A673 (cell line): ENCODE measurements at regions of chr10 and their contacts with region 1.

Region 1: GRCh38 chr10:94362360-94363250 is at the start of gene NOC3L:
- DNase-seq: peak; percentile 97
- H3K4me3 ChIP-seq: peak within 1 kb of the TSS; percentile 74
- H3K27ac ChIP-seq: peak within 1 kb of the TSS; percentile 72
- H3K4me1 ChIP-seq: peaks cover 11% of the 10 kb centered on the region
- H3K27me3 ChIP-seq: no peaks in the 10 kb centered on the region
- CTCF ChIP-seq: peak; percentile 74
- total RNA-seq, gene NOC3L: 36.8 and 48.6 TPM in 2 replicates

Region 2: DNA sequence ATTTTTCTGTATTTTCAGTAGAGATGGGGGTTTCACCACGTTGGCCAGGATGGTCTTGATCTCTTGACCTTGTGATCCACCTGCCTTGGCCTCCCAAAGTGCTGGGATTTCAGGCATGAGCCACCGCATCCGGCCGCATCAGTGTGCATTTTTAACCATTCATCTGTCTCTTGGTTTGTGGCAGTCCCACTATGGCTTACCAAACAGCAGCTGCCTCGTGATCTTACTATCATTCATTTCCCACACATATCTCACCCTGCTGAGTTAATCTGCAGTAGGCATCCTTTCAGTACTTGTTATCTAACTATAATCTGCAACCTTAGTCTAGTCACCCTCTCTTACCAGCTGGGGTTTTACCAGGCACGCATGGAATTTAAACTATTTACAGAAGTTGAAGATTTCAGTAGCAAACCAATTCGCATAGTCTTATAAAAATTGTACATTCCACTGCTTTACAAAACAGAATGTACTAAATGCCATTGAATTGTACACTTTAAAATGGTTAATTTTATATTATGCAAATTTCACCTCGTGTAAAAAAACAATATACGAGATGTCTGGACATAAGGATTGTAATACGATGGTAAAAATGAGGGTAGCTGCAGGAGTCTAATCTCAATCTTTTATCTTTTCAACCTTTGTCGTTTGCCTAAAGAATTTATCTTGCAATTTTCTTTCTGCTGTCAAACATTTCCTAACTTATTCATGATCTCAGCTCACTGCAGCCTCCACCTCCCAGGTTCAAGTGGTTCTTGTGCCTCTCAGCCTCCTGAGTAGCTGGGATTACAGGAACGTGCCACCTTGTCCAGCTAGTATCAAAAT is 35.2 kb after region 1 on chr10:
- CTCF ChIA-PET with region 1: no interaction called
- POLR2A ChIA-PET with region 1: no interaction called
- intact Hi-C with region 1: no loop called
- DNase-seq: peak; percentile 60
- H3K4me3 ChIP-seq: no peak overlapping the region
- H3K27ac ChIP-seq: no peak overlapping the region
- H3K4me1 ChIP-seq: no peaks in the 10 kb centered on the region
- H3K27me3 ChIP-seq: peaks cover 10% of the 10 kb centered on the region
- CTCF ChIP-seq: no peak

Region 3: DNA sequence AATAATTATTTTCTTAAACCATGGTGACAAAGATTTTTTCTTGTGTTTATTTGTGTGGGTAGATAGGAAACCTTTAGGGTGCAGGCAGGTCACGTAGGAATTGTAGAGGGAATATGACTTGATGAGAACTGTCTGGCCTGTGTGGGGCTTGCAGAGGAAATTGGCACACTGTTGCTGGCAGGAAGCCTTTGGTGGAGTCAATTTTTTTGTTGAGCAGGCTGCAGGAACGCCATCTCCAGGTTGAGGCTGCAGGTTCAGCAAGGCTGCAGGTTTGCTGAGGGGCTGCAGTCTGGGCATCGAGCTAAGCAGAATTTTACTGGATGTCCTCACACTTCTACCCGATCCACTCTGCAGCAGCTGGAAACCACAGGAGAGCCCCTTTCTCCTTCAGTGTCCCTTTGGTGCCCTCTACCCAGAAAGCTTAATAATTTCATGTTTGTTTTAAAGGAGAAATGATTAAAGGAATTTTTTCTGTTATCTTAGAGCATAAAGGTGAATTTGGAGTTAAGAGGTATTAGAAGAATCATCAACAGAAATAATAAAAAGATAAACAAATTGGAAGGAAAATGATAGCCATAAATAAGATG is 76.8 kb after region 1 on chr10:
- CTCF ChIA-PET with region 1: no interaction called
- POLR2A ChIA-PET with region 1: no interaction called
- intact Hi-C with region 1: loop called (anchors 5 kb)
- DNase-seq: peak; percentile 12
- H3K4me3 ChIP-seq: no peak overlapping the region
- H3K27ac ChIP-seq: no peak overlapping the region
- H3K4me1 ChIP-seq: no peaks in the 10 kb centered on the region
- H3K27me3 ChIP-seq: peaks cover 6% of the 10 kb centered on the region
- CTCF ChIP-seq: no peak

Region 4: DNA sequence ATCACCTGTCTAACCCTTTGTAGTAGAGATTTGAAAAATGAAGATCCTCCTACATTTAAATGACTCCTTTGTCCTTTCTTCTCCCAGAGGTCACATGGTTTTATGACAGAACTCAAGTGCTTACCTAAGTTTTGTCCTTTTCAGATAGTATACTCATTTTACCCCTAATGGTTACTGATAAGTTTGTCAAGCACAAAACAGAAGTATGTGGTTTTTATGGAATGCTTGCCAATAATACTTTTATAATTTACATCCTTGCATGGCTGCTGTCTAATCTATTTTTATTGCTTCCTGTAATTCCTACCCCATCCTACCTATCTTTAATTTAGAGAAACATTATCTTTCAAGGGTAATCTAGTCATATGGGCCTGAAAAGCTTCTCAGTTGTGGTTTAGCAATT is 220.5 kb after region 1 on chr10:
- CTCF ChIA-PET with region 1: no interaction called
- POLR2A ChIA-PET with region 1: no interaction called
- intact Hi-C with region 1: loop called (anchors 10 kb)
- DNase-seq: no peak
- H3K4me3 ChIP-seq: no peak overlapping the region
- H3K27ac ChIP-seq: peak overlapping the region; percentile 19
- H3K4me1 ChIP-seq: no peaks in the 10 kb centered on the region
- H3K27me3 ChIP-seq: no peaks in the 10 kb centered on the region
- CTCF ChIP-seq: no peak